Calu3 (cell line): ENCODE measurements at regions of chr5 and their contacts with region 1.

Region 1: GRCh38 chr5:126536874-126537273 is 58.1 kb downstream of the ALDH7A1 start:
- DNase-seq: no peak
- H3K4me3 Mint-ChIP-seq: no peak overlapping the region
- H3K27ac Mint-ChIP-seq: no peak overlapping the region
- H3K4me1 Mint-ChIP-seq: no peaks in the 10 kb centered on the region
- H3K27me3 Mint-ChIP-seq: no peaks in the 10 kb centered on the region
- CTCF ChIP-seq: no peak

Region 2: DNA sequence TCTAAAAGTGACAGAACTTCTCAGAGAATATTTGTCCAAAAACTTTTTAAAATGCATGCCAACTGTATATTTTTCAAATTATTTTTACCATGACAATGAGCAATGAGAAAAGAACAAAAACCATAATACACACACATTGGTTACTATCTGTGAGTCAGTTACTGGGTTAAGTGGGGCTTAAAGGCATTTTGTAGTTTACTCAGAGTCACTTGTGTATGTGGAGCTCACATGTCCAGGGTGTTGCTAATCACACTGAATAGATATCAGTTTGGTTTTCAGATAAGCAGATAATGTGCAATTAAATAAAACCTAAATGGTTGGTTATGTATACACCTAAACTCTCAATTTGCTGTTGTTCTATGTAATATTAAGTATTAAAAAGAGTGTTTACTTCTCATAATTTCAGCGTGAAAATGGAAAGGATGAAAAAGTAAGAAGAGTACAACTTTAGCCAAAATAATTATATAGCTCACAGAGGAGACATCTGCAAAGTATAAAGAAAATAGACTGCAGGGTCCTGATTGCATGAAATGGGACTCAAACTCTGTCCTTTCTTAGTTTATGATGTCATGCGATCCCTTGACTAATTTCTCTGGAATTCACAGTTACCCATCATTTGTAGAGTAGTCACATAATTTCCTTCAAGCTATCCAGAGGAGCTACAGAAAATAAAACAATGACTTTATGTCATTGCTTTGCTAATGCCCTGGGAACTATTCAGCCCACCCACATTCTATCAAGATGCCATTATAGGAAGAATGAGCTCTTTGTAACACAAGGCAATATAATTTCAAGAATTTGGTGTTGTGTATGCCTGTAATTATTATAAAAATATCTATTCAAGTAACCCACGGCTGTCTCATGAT is 1402.4 kb before region 1 on chr5:
- CTCF ChIA-PET with region 1: no interaction called
- intact Hi-C with region 1: no loop called
- DNase-seq: peak; percentile 16
- H3K4me3 Mint-ChIP-seq: no peak overlapping the region
- H3K27ac Mint-ChIP-seq: no peak overlapping the region
- H3K4me1 Mint-ChIP-seq: peaks cover 19% of the 10 kb centered on the region
- H3K27me3 Mint-ChIP-seq: no peaks in the 10 kb centered on the region
- CTCF ChIP-seq: no peak

Region 3: DNA sequence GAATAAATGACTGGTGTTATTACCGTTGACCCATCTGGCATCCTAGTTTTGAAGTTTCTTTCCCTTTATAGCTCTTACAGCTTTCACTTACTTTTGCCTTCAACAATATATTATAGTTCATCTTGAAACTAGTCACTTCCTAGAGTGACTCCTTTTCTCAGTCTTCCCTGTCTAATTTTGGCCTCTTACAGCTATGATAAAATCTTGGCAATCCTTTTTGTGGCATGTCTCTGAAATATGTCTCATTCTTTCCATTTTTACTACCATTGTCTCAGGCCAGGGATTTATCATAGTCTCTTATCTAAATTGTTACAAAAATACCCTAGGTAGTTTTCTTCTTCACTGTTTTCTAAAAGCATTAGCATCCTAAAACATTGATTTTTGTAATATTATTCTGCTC is 1169.2 kb before region 1 on chr5:
- CTCF ChIA-PET with region 1: no interaction called
- intact Hi-C with region 1: no loop called
- DNase-seq: no peak
- H3K4me3 Mint-ChIP-seq: no peak overlapping the region
- H3K27ac Mint-ChIP-seq: no peak overlapping the region
- H3K4me1 Mint-ChIP-seq: no peaks in the 10 kb centered on the region
- H3K27me3 Mint-ChIP-seq: no peaks in the 10 kb centered on the region
- CTCF ChIP-seq: no peak

Region 4: GRCh38 chr5:126339215-126339805 is 197.6 kb before region 1 on chr5:
- CTCF ChIA-PET with region 1: interaction called, 11 read pairs
- intact Hi-C with region 1: loop called (anchors 1 kb)
- DNase-seq: peak; percentile 72
- H3K4me3 Mint-ChIP-seq: no peak overlapping the region
- H3K27ac Mint-ChIP-seq: no peak overlapping the region
- H3K4me1 Mint-ChIP-seq: peaks cover 7% of the 10 kb centered on the region
- H3K27me3 Mint-ChIP-seq: no peaks in the 10 kb centered on the region
- CTCF ChIP-seq: peak; percentile 75

Region 5: GRCh38 chr5:126422989-126423788 is 113.7 kb before region 1 on chr5 and contains the start of gene GRAMD2B:
- CTCF ChIA-PET with region 1: no interaction called
- intact Hi-C with region 1: loop called (anchors 5 kb)
- DNase-seq: peak; percentile 85
- H3K4me3 Mint-ChIP-seq: peak within 1 kb of the TSS; percentile 93
- H3K27ac Mint-ChIP-seq: peak within 1 kb of the TSS; percentile 81
- H3K4me1 Mint-ChIP-seq: peaks cover 13% of the 10 kb centered on the region
- H3K27me3 Mint-ChIP-seq: no peaks in the 10 kb centered on the region
- CTCF ChIP-seq: no peak
- total RNA-seq, gene GRAMD2B: 23.0 and 23.3 TPM in 2 replicates

Region 6: GRCh38 chr5:126499853-126500342 is 37.0 kb before region 1 on chr5:
- CTCF ChIA-PET with region 1: interaction called, 7 read pairs
- intact Hi-C with region 1: loop called (anchors 5 kb)
- DNase-seq: peak; percentile 34
- H3K4me3 Mint-ChIP-seq: no peak overlapping the region
- H3K27ac Mint-ChIP-seq: no peak overlapping the region
- H3K4me1 Mint-ChIP-seq: no peaks in the 10 kb centered on the region
- H3K27me3 Mint-ChIP-seq: no peaks in the 10 kb centered on the region
- CTCF ChIP-seq: peak; percentile 52